A549 (cell line): ENCODE measurements at regions of chr12 and their contacts with region 1.

Region 1: DNA sequence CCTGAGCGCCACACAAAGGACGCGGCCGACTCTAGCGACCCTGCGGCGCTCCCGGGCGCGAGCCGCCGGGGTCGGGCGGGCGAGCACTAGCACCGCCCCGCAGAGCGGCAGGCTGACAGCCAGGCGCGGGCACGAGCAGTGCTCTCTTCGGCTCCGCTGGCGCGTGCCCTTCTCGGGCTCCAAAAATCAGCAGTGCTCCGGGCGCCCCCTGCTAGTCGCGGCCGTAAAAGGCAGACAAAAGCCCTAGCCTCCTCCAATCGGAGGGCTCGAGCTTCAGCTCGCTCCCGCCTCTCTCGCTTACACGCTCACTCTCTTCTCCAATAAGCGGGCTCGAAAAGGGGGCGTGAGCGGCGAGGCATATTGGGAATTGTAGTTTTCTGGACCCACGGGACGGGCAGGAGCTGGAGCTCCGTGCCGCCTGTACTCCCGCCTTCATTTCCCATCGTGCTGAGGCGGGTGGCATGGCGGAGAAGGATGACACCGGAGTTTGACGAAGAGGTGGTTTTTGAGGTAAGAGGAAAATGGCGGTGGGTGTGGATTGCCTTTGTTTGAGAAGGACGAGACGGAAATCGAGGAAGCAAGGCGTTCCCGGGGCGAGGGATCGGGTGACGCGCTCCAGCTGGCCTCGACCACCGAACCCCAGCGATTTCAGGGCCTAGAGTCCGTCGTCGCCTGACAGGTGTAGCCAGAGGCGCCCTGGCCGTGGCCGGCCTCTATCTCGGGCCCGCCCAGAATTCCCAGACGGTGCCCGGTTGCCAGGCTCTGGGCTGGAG is at the starts of genes FGD6 and VEZT:
- DNase-seq: peak; percentile 95 to 99
- ATAC-seq: peak; percentile 90 to 93
- H3K4me3 ChIP-seq: peak within 1 kb of the TSS; percentile 83
- H3K27ac ChIP-seq: peak within 1 kb of the TSS; percentile 91 to 93
- H3K4me1 ChIP-seq: peaks cover 57% of the 10 kb centered on the region; the same call in 2 of the 3 replicates
- CTCF ChIP-seq: peak; percentile 71
- EP300 ChIP-seq: no peak
- POLR2A ChIP-seq: peak; percentile 67
- RAD21 ChIP-seq: peak; percentile 85 to 94
- polyA plus RNA-seq, gene FGD6: 42.0 and 48.0 TPM in 2 replicates
- polyA plus RNA-seq, gene VEZT: 256 and 259 TPM in 2 replicates

Region 2: DNA sequence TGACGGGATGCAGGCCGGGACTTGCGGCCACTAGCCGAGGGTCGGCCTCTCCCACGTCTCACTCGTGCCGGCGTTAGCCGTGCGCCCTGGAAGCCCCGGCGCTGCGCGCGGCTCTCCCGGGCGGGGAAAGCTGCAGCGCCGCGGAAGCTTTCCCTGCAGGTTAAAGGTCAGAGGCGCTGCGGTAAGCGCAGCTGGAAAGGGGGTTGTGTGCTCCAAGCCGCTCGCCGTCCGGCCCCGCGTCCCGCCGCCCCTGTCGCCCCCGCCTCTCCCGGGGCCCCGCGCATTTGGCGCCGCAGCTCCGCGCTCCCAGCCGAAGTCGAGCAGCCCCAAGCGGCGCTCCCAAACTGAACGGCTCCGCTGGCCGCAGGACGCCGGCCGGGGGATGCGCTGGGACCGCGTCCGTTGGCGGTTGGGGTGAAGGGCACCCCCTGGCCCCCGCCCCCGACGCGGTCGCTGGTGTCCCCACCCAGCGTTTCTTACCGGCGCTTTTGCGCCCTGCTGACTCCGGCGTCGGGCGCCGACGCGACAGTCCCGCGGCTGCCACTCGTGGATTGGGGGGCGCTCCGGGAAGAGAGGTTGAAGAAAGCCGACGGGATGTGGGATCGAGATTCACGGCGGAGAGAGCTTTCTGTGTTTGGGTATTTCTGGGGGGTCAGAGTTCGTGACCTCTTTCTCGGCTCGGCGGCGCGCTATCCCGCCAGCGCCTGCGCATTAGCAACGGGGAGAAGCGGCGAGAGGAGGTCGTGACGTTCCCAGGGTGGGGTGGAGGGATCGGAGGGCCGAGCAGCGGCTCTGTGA is 144.5 kb before region 1 on chr12 and contains the start of gene NR2C1:
- CTCF ChIA-PET with region 1: interaction called, 15 read pairs
- POLR2A ChIA-PET with region 1: interaction called, 12 read pairs
- DNase-seq: peak; percentile 97 to 99
- ATAC-seq: peak; percentile 97 to 98
- H3K4me3 ChIP-seq: peak within 1 kb of the TSS; percentile 85
- H3K27ac ChIP-seq: peak within 1 kb of the TSS; percentile 85 to 93
- H3K4me1 ChIP-seq: peaks cover 10% of the 10 kb centered on the region
- CTCF ChIP-seq: no peak; the same call in 2 of the 3 replicates
- EP300 ChIP-seq: no peak; a peak in 1 of 5 replicates
- POLR2A ChIP-seq: peak; percentile 36
- RAD21 ChIP-seq: no peak; a peak in 1 of 5 replicates
- polyA plus RNA-seq, gene NR2C1: 50.9 and 55.2 TPM in 2 replicates

Region 3: DNA sequence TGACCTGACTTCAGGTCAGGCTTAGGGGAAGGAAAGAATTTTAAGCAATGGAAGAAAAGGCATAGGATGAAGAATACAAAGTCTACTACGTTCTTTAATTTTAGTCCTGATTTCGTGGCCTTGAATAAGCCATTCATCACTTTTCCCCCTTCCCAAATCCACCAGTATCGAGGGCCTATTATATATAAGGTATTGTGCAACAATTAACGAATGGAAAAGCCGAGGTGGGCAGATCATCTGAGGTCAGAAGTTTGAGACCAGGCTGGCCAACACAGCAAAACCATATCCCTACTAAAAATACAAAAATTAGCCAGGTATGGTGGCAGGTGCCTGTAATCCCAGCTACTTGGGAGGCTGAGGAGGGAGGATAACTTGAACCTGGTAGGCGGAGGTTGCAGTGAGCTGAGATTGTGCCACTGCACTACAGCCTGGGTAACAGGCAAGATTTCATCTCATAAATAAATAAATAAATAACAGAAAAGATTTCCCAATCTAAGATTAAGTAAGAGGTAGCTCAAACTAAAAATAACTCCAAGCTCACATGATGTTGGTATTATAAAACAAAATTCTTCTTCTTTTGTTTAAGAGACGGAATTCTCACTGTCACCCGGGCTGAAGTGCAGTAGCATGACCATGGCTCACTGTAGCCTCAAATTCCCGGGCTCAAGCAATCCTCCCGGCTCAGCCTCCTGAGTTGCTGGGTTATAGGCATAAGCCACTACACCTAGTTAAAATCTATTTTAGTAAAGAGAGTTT is 85.8 kb before region 1 on chr12:
- CTCF ChIA-PET with region 1: interaction called, 11 read pairs
- POLR2A ChIA-PET with region 1: no interaction called
- DNase-seq: no peak
- ATAC-seq: no peak
- H3K4me3 ChIP-seq: no peak overlapping the region
- H3K27ac ChIP-seq: peak overlapping the region in 1 of 2 experiments; percentile 73; a peak in 1 of 6 replicates
- H3K4me1 ChIP-seq: peaks cover 20% of the 10 kb centered on the region
- CTCF ChIP-seq: no peak
- EP300 ChIP-seq: no peak
- POLR2A ChIP-seq: no peak
- RAD21 ChIP-seq: no peak

Region 4: GRCh38 chr12:95164656-95165055 is 52.9 kb before region 1 on chr12:
- CTCF ChIA-PET with region 1: interaction called, 21 read pairs
- POLR2A ChIA-PET with region 1: interaction called, 5 read pairs
- DNase-seq: no peak
- ATAC-seq: no peak; a peak in 1 of 6 replicates
- H3K4me3 ChIP-seq: no peak overlapping the region
- H3K27ac ChIP-seq: peak overlapping the region; percentile 56 to 81; a peak in 5 of 6 replicates
- H3K4me1 ChIP-seq: peaks cover 45% of the 10 kb centered on the region
- CTCF ChIP-seq: no peak
- EP300 ChIP-seq: no peak
- POLR2A ChIP-seq: no peak
- RAD21 ChIP-seq: no peak

Region 5: GRCh38 chr12:95185072-95185471 is 32.5 kb before region 1 on chr12:
- CTCF ChIA-PET with region 1: interaction called, 24 read pairs
- POLR2A ChIA-PET with region 1: interaction called, 18 read pairs
- DNase-seq: no peak
- ATAC-seq: no peak
- H3K4me3 ChIP-seq: no peak overlapping the region
- H3K27ac ChIP-seq: peak overlapping the region in 1 of 2 experiments; percentile 90; a peak in 3 of 6 replicates
- H3K4me1 ChIP-seq: peaks cover 77% of the 10 kb centered on the region
- CTCF ChIP-seq: no peak
- EP300 ChIP-seq: no peak
- POLR2A ChIP-seq: no peak
- RAD21 ChIP-seq: no peak

Region 6: DNA sequence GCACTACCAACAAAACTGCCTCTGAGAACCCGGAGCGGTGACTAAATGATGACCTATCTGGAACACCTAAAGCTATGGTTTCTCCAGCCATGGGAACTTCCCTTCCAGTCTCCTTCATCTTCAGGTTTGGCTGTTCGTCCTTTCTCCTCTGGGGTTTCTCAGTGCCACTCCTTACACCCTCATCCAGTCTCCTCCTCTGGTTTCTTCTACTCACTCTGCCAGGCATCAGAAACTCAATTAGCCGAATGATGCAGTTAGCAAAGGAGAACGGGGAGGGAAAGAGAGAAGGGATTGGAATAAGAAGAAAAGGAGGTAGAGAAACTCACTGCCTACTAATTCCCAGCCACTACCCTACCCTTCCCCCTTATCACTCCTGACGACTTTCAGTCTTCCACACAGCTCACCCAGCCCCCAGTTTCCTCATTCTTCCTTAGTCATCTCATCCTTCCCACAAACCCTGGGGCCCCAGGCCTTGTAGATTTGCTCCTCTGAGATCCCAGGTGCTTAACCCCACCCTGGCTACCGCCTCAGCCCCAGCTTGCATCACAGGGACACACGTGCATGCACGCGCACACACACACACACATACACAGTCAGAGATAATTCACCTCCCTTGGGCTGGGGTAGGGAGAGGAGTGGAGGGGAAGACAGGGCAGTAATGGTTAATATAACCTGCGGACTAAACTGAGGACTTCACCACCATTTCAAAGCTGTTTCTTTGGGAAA is 13.3 kb before region 1 on chr12:
- CTCF ChIA-PET with region 1: interaction called, 54 read pairs
- POLR2A ChIA-PET with region 1: interaction called, 42 read pairs
- DNase-seq: peak; percentile 92 to 99
- ATAC-seq: peak; percentile 93 to 95
- H3K4me3 ChIP-seq: peak overlapping the region; percentile 35
- H3K27ac ChIP-seq: peak overlapping the region; percentile 95 to 99
- H3K4me1 ChIP-seq: peaks cover 70% of the 10 kb centered on the region
- CTCF ChIP-seq: no peak
- EP300 ChIP-seq: peak; percentile 77 to 91; a peak in 4 of 5 replicates
- POLR2A ChIP-seq: no peak
- RAD21 ChIP-seq: peak; percentile 41 to 59

Region 7: GRCh38 chr12:95336390-95337067 is 119.0 kb after region 1 on chr12:
- CTCF ChIA-PET with region 1: interaction called, 24 read pairs
- POLR2A ChIA-PET with region 1: interaction called, 6 read pairs
- DNase-seq: peak; percentile 77 to 90
- ATAC-seq: peak; percentile 85 to 88
- H3K4me3 ChIP-seq: no peak overlapping the region
- H3K27ac ChIP-seq: peak overlapping the region; percentile 72 to 87
- H3K4me1 ChIP-seq: peaks cover 66% of the 10 kb centered on the region
- CTCF ChIP-seq: peak; percentile 99
- EP300 ChIP-seq: no peak
- POLR2A ChIP-seq: no peak
- RAD21 ChIP-seq: peak; percentile 99 to 100